ENCODE measurements at regions of chr16 and their contacts with region 1.

Region 1: GRCh38 chr16:67246934-67247697 is at the start of gene FHOD1:
- DNase-seq: peak; percentile 93

Region 2: GRCh38 chr16:67226804-67227557 is 20.1 kb before region 1 on chr16 and contains the start of gene TMEM208:
- CTCF ChIA-PET with region 1: interaction called, 3 read pairs
- POLR2A ChIA-PET with region 1: interaction called, 15 read pairs
- DNase-seq: peak; percentile 98

Region 3: DNA sequence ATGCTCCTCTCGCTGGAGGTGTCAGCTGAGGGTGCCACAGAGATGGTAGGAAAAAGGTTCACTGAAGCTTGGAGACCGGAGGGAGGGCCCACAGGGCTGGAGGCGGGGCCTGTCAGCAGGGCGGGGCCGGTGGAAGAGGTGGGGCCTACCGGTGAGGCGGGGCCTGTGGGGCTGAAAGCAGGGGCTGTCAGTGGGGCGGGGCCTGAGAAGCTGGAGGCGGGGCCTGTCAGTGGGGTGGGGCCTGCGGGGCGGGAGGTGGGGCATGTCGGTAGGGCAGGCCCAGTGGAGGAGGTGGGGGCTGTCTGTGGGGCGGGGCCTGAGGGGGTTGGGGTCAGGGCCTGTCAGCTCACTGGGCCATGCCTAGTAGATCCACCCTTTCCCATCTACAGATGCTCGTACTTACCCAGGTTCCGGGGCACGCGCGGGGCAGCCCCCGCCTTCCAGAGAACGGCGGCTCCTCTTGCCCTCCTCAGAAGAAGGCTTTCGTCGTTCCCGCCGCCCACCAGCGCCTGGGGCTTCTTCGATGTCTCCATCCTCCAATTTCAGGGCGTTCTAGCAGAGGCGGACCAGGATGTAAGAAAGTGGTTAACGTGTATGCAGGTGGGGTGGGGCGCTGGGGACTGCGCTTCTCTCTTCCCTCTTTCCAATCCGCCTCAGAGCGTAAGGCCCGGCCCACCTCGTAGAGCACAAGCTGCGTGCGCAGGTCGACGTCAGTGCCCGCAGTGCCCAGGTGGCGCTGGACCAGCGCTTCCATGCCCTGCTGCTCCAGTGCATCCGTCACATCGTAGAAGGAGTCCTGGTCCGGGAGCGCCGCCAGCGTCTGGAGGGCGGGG is 10.3 kb before region 1 on chr16:
- CTCF ChIA-PET with region 1: no interaction called
- POLR2A ChIA-PET with region 1: interaction called, 41 read pairs
- DNase-seq: peak; percentile 97

Region 4: GRCh38 chr16:67260426-67261075 is 13.4 kb after region 1 on chr16:
- CTCF ChIA-PET with region 1: interaction called, 10 read pairs
- POLR2A ChIA-PET with region 1: interaction called, 11 read pairs
- DNase-seq: peak; percentile 43